PC-9 (cell line): ENCODE measurements at regions of chr6 and their contacts with region 1.

Region 1: GRCh38 chr6:98054453-98054852 is 771.4 kb upstream of the MMS22L start:
- DNase-seq: no peak
- H3K4me3 ChIP-seq: no peak overlapping the region
- H3K27ac ChIP-seq: no peak overlapping the region
- H3K4me1 ChIP-seq: no peaks in the 10 kb centered on the region
- H3K27me3 ChIP-seq: no peaks in the 10 kb centered on the region
- CTCF ChIP-seq: peak; percentile 60

Region 2: DNA sequence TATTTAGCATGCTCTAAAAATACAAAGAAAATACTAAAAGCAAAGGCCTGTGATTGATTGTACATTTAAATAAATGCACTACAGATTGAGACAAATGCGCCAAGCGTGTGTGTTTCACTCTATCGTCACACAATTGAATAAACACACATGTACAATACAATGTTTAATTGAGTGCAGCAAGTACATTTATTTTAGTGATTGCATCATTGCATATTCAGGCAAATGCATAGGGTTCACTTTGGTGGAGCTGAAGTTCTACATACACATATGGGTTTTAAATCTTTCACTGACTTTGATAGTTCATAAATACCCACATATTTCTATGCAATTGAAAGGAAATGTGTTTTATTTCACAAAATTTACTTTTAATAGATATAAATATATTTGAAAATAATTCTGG is 20.8 kb before region 1 on chr6:
- CTCF ChIA-PET with region 1: no interaction called
- POLR2A ChIA-PET with region 1: no interaction called
- intact Hi-C with region 1: no loop called
- DNase-seq: no peak
- H3K4me3 ChIP-seq: no peak overlapping the region
- H3K27ac ChIP-seq: no peak overlapping the region
- H3K4me1 ChIP-seq: no peaks in the 10 kb centered on the region
- H3K27me3 ChIP-seq: no peaks in the 10 kb centered on the region
- CTCF ChIP-seq: no peak

Region 3: DNA sequence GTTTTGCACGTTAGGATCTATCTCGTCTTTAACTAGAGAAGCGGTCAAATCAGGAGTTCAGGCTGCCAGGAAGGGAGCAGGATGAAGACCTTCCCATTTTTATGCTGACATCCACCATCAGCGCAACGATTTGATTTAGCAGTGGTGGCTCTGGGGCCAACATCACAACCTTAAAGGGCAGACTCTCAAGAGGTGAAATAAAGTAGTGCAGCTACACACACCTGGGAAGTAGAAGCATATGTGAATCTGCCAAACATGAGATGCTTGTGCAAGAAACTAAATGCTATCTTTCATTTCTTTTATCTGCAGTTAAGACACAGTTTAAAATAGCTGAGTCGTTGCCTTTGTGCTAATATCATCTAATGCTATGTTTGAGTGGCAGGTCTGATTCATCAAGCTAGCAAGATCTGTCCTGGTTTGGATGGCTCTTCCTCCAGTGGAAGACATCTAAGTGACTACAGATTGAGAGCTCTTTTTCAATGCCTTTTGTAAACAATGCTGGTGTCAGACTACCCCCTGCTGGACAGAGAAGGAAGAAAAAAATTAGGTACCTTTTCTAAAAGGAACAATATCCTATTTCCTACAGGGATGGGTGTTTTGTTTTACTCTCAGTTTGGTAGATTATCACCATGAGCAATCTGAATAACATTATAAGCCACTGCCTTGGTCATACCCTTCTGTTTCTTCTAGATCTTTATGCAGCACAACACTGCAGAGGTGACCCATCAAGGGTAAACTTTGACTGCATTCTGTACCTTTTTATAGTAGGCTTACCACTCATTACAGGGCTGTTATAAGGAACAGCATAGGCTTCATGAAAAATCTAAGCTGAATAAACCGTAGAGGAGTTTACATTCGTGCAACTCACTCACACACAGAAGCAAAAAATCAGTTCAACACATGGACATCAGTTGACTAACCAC is 1064.9 kb after region 1 on chr6:
- CTCF ChIA-PET with region 1: no interaction called
- POLR2A ChIA-PET with region 1: no interaction called
- intact Hi-C with region 1: loop called (anchors 10 kb)
- DNase-seq: peak in 1 of 2 experiments; percentile 15
- H3K4me3 ChIP-seq: no peak overlapping the region
- H3K27ac ChIP-seq: no peak overlapping the region
- H3K4me1 ChIP-seq: 0 out of 2 replicates have a peak, but pooled peaks cover 4% of the 10 kb centered on the region
- H3K27me3 ChIP-seq: no peaks in the 10 kb centered on the region
- CTCF ChIP-seq: peak; percentile 85